ENCODE measurements at regions of chr1 and their contacts with region 1.

Region 1: DNA sequence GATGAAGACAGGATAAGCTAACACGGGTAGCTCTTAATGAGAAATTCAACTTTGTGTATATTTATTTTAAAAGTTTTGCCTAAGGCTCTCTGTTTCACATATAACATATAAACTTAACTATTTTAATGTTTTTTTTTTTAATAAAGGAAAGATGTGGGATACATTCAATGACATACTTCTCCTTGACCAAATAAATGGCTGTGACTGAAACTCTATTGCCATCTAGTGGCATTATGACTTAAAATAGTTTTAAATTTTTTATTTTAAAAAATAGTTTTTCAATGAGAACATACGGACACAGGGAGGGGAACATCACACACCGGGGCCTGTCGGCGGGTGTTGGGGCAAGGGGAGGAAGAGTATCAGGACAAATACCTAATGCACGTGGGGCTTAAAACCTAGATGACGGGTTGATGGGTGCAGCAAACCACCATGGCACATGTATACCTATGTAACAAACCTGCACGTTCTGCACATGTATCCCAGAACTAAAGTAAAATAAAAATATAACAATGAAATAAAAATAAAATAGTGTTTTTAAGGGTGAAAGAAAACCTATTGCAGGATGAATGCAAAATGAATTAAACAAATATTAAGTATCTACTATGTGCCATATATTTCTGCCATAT is 83.4 kb downstream of the LYST start:
- DNase-seq: peak; percentile 66
- ATAC-seq: peak; percentile 22; the same call in 1 of the 2 replicates
- H3K4me3 ChIP-seq: no peak overlapping the region
- H3K27ac ChIP-seq: no peak overlapping the region
- H3K4me1 ChIP-seq: peaks cover 5% of the 10 kb centered on the region
- H3K27me3 ChIP-seq: no peaks in the 10 kb centered on the region
- CTCF ChIP-seq: no peak; the same call in 1 of the 2 replicates

Region 2: GRCh38 chr1:235513495-235514366 is 269.5 kb before region 1 on chr1:
- CTCF ChIA-PET with region 1: interaction called, 4 read pairs
- POLR2A ChIA-PET with region 1: no interaction called
- intact Hi-C with region 1: loop called (anchors 2 kb)
- DNase-seq: peak; percentile 75
- ATAC-seq: peak; percentile 67
- H3K4me3 ChIP-seq: no peak overlapping the region
- H3K27ac ChIP-seq: no peak overlapping the region
- H3K4me1 ChIP-seq: no peaks in the 10 kb centered on the region
- H3K27me3 ChIP-seq: no peaks in the 10 kb centered on the region
- CTCF ChIP-seq: peak; percentile 79